Dorsolateral prefrontal cortex (tissue), 120 donors: ENCODE measurements at regions of chr5 and their contacts with region 1.

Region 1: GRCh38 chr5:151063142-151063949 is 17.5 kb downstream of the TNIP1 start:
- DNase-seq: peak in 1 of 10 donors; percentile 59
- H3K4me3 ChIP-seq: no peak overlapping the region
- H3K27ac ChIP-seq: peak overlapping the region in 32 of 59 donors; percentile 4 to 78 (median 48)
- H3K27me3 ChIP-seq: no peaks in the 10 kb centered on the region
- CTCF ChIP-seq: no peak

Region 2: GRCh38 chr5:151097786-151098498 is 34.6 kb after region 1 on chr5:
- intact Hi-C with region 1: loop called in 1 of 2 experiments (anchors 5 kb)
- DNase-seq: no peak
- H3K4me3 ChIP-seq: no peak overlapping the region
- H3K27ac ChIP-seq: peak overlapping the region in 1 of 59 donors; percentile 8
- H3K27me3 ChIP-seq: no peaks in the 10 kb centered on the region
- CTCF ChIP-seq: no peak